Activated naive CD4-positive, alpha-beta T cell treated with anti-CD3 and anti-CD28 coated beads for 36 hours (primary cell): ENCODE measurements at regions of chr2 and their contacts with region 1.

Region 1: GRCh38 chr2:108583903-108584520 is 49.7 kb downstream of the LIMS1 start:
- DNase-seq: peak; percentile 78
- H3K4me3 Mint-ChIP-seq: no peak overlapping the region
- H3K27ac Mint-ChIP-seq: no peak overlapping the region
- H3K4me1 Mint-ChIP-seq: peaks cover 20% of the 10 kb centered on the region
- H3K27me3 Mint-ChIP-seq: no peaks in the 10 kb centered on the region

Region 2: DNA sequence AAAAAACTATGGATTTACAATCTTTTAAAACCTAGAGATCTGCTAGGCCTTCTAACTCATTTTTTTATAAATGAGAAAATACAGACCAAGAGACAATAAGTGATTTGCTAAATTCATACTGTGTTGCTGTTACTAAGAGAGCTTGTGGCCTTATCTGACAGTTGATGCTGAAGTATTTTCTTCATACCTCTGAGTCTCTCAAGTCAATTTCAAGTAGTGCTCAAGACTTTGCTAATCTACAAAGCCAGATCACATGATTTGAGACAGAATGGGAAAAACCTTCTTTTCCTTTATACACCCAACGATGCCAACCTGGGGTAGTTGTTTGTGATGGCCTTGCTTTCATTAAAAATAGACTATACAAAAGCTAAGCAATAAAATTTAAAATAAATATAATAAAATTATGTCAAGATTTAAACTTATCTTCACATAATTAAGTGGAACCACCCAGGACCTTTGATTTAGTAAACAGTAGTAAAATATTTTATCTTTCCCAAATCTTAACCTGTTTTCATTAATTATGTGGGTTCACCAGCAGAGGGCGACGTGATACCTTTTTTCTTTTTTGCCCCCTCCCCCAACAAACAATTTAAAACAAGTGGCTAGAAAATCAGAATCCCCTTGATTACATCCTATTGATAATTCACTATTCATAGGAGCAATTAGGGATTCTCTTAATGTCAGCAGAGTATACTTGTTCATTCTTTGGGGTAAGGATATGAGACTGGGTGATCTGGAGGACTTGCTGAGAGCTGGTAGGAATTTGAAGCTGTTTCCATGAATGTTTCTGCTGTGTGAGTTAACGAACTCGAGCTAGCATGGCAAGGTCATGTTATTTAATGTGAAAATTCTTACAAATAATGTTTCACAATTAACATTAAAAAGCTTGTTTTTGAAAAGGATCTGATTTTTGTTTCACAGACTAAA is 647.3 kb before region 1 on chr2:
- CTCF ChIA-PET with region 1: interaction called, 4 read pairs
- intact Hi-C with region 1: loop called (anchors 2 kb)
- DNase-seq: peak; percentile 12
- H3K4me3 Mint-ChIP-seq: no peak overlapping the region
- H3K27ac Mint-ChIP-seq: no peak overlapping the region
- H3K4me1 Mint-ChIP-seq: no peaks in the 10 kb centered on the region
- H3K27me3 Mint-ChIP-seq: peaks cover 14% of the 10 kb centered on the region

Region 3: DNA sequence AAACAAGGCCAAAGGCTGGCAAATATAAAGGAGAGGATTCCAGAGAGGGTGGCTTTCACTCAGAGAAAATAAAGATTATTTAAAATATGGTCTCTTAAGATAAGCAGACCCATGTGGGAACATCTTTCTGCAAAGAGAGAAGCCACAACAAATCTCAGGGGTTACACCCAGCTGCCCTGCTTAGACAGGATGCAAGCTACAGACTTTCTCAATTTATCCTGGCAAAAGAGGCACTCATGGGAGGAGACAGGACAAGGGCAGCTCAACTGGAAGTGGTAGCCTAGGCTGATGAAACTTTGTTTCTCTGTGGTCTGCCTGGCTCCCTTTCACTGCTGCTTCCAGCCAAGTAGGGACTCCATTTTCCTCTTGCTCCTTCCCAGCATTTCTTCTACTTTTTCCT is 232.1 kb before region 1 on chr2:
- CTCF ChIA-PET with region 1: interaction called, 4 read pairs
- intact Hi-C with region 1: loop called (anchors 1 kb)
- DNase-seq: no peak
- H3K4me3 Mint-ChIP-seq: no peak overlapping the region
- H3K27ac Mint-ChIP-seq: no peak overlapping the region
- H3K4me1 Mint-ChIP-seq: no peaks in the 10 kb centered on the region
- H3K27me3 Mint-ChIP-seq: peaks cover 5% of the 10 kb centered on the region

Region 4: GRCh38 chr2:108417255-108417654 is 166.8 kb before region 1 on chr2:
- CTCF ChIA-PET with region 1: interaction called, 3 read pairs
- intact Hi-C with region 1: loop called (anchors 1 kb)
- DNase-seq: peak; percentile 10
- H3K4me3 Mint-ChIP-seq: no peak overlapping the region
- H3K27ac Mint-ChIP-seq: no peak overlapping the region
- H3K4me1 Mint-ChIP-seq: no peaks in the 10 kb centered on the region
- H3K27me3 Mint-ChIP-seq: no peaks in the 10 kb centered on the region

Region 5: DNA sequence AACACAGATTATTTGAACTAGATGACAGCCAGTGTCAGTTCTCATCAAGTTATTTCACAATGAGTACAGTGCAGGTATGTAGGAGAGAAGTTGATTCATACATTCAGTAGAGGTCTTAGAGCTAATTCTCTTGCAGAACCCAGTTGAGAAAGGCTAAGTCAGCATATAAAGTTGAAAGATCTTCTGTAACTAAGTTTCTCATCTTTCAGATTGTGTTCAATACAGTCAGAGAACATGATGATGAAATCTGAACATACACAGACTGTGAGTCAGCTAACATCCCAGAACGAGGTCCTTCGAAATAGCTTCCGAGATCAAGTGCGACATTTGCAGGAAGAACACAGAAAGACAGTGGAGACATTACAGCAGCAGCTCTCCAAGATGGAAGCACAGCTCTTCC is 91.6 kb before region 1 on chr2:
- CTCF ChIA-PET with region 1: no interaction called
- intact Hi-C with region 1: loop called (anchors 5 kb)
- DNase-seq: no peak
- H3K4me3 Mint-ChIP-seq: no peak overlapping the region
- H3K27ac Mint-ChIP-seq: peak overlapping the region; percentile 11
- H3K4me1 Mint-ChIP-seq: peaks cover 18% of the 10 kb centered on the region
- H3K27me3 Mint-ChIP-seq: no peaks in the 10 kb centered on the region

Region 6: DNA sequence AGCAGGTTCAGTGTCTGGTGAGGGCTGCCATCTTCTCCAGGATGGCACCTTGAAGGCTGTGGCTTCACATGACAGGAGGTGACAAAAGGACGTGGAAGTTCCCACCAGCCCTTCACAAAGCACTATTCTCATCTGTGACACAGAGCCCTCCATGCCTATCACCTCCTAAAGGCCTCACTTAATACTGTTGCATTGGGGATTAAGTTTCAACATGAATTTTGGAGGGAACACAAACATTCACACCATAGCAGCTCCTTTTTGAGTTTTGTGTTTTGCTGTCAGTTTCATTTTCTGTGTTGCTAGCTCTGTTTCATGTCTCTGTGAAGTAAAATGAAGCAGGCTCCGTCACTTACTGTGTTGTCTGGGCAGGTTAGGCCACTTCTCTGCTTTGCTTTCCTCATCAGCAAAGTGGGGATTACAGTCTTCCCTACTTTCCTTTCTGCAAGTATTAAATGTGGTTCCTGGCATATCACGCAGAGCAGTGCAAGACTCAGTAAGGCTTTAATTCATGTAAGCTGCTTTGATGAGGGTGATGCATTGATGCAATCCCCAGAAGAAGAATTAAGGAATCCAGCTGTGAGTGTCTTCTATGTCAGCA is 18.1 kb before region 1 on chr2:
- CTCF ChIA-PET with region 1: interaction called, 13 read pairs
- intact Hi-C with region 1: no loop called
- DNase-seq: peak; percentile 52
- H3K4me3 Mint-ChIP-seq: peak overlapping the region; percentile 5
- H3K27ac Mint-ChIP-seq: peak overlapping the region; percentile 15
- H3K4me1 Mint-ChIP-seq: peaks cover 8% of the 10 kb centered on the region
- H3K27me3 Mint-ChIP-seq: no peaks in the 10 kb centered on the region

Region 7: DNA sequence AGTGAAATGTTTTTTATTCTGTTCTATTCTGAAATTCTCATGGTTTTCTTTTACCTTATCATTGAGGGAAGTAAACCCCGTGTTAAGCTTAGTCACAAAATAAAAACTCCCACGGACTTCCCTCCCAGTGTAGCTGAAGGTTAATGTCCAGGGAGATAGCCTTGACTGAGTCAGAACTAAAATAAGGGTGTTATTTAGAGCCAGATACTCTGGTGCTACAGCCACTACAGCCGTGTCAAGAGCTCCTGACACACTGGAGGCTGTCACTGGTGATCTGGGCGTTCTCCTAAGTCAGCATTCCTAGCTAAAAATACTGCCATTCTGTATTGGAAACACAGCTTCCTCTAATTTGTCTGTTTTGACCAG is 53.3 kb after region 1 on chr2:
- CTCF ChIA-PET with region 1: interaction called, 12 read pairs
- intact Hi-C with region 1: no loop called
- DNase-seq: no peak
- H3K4me3 Mint-ChIP-seq: no peak overlapping the region
- H3K27ac Mint-ChIP-seq: no peak overlapping the region
- H3K4me1 Mint-ChIP-seq: peaks cover 54% of the 10 kb centered on the region
- H3K27me3 Mint-ChIP-seq: no peaks in the 10 kb centered on the region

Region 8: DNA sequence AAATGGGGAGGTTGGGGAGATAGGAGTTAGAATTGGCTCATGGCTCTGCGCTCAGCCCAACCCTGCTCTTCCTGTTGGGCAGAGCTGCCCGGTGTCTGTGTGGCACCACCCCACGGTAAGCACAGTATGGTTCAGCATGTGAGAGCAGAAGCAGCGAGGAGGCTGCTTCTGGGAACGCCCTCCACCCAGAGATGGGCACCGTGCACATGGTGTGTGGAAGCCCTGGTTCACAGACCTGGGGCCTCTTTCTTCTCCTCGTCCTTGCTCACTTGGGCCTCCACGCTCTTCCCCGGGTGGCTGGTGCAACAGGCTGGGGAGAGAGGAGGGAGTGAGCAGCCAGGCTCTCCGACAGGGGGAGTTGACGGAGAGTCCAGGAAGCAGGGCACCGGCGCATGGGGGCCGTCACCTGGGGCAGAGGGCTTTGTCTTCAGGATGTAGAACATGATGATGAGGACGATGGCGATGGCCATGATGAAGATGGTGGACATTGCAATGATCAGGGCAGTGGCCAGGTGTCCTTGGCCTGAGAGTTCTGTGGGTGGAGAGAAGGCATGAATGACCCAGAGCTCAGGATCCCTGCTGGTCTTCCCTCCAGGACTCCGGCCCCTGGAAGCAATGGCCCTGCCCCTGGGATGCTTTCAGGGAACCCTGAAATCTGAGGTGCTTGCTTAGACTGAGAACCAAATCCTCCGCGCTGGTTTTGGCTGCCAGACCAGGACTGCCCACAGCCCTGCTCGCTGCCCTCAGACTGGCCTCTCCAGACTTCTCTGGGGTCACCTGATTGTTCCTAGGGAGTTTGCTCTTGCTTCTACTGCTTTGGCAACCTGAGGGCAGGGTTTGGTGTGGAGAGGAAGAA is 326.8 kb after region 1 on chr2:
- CTCF ChIA-PET with region 1: no interaction called
- intact Hi-C with region 1: no loop called
- DNase-seq: no peak
- H3K4me3 Mint-ChIP-seq: no peak overlapping the region
- H3K27ac Mint-ChIP-seq: no peak overlapping the region
- H3K4me1 Mint-ChIP-seq: peaks cover 2% of the 10 kb centered on the region
- H3K27me3 Mint-ChIP-seq: no peaks in the 10 kb centered on the region